Dendritic cell treated with granulocyte-macrophage colony-stimulating factor and Interleukin-4, amounts not matched to agents 40 ng/mL and 50 ng/mL, for 4 days (primary cell): ENCODE measurements at regions of chr2 and their contacts with region 1.

Region 1: GRCh38 chr2:165953655-165954606 is at the start of gene TTC21B:
- H3K4me3 Mint-ChIP-seq: no peak within 1 kb of the TSS
- H3K27ac Mint-ChIP-seq: no peak within 1 kb of the TSS
- H3K4me1 Mint-ChIP-seq: peaks cover 10% of the 10 kb centered on the region
- H3K27me3 Mint-ChIP-seq: no peaks in the 10 kb centered on the region

Region 2: DNA sequence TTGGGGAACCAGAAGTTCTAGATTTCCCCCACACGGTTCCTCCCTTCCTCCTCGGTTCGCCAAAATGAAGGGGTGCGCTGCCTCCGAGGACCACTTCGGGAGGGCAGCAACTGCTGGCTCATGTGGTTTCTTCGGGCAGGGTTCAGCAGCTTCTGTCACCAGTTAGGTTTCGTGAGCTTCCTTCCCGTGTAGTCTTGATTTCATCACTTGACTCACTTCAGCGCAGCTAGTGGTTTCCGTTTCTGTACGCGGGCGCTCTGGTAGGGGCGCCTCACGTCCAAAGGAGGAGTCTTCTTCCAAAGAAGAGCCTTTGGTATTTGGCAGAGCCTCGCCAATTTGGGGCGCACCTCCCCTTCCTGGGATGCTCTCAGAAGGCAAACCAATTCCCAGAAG is 159.4 kb before region 1 on chr2:
- intact Hi-C with region 1: loop called (anchors 5 kb)
- H3K4me3 Mint-ChIP-seq: peak overlapping the region; percentile 84
- H3K27ac Mint-ChIP-seq: peak overlapping the region; percentile 76
- H3K4me1 Mint-ChIP-seq: peaks cover 17% of the 10 kb centered on the region
- H3K27me3 Mint-ChIP-seq: peaks cover 3% of the 10 kb centered on the region

Region 3: GRCh38 chr2:166013878-166014277 is 59.9 kb after region 1 on chr2:
- intact Hi-C with region 1: no loop called
- H3K4me3 Mint-ChIP-seq: no peak overlapping the region
- H3K27ac Mint-ChIP-seq: no peak overlapping the region
- H3K4me1 Mint-ChIP-seq: no peaks in the 10 kb centered on the region
- H3K27me3 Mint-ChIP-seq: no peaks in the 10 kb centered on the region

Region 4: DNA sequence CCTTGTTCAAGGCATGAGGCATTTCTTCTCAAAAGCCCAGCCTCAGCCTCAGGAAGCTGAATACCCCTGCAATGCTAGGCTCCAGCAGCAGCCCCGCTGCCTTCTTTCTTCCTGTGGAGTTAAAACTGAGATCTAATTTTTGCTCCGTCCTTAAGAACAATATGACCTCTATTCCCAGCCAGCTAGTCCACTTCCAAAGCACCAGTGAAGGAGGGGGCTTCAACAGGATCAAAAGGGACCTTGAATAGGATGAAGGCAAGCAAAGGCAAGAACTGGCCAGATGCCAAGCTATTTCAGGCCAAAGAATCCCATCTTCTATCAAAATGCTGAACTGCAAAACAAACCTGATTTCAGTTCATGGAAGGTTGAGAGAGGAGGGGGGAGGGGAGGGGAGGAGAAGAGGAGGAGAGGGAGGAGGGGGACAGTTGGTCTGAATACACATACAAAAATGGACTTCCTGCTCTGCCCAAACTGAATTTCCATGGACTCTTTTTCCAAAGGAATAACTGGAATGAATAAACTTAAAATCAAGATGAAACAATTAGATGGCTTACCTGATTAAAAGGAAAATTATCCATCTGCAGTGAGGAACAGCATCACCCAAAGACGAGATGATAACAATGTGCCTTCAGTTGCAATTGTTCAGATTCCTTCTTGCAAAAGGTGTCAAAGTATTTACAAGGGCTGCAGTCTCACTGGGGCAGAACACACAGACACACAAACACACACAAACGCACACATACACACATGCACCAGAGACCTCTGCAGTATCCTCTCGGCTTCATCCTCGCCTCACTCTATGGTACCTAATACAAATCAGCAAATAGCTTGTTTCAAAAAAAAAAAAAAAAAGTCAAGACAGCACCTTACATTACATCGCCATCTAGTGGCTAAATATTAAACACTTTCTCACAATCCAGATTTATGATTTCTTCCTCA is 173.6 kb after region 1 on chr2 and contains the start of gene SCN1A:
- intact Hi-C with region 1: loop called (anchors 1 kb)
- H3K4me3 Mint-ChIP-seq: no peak within 1 kb of the TSS
- H3K27ac Mint-ChIP-seq: no peak within 1 kb of the TSS
- H3K4me1 Mint-ChIP-seq: no peaks in the 10 kb centered on the region
- H3K27me3 Mint-ChIP-seq: peaks cover 4% of the 10 kb centered on the region

Region 5: GRCh38 chr2:166417669-166418068 is 463.7 kb after region 1 on chr2:
- intact Hi-C with region 1: loop called (anchors 10 kb)
- H3K4me3 Mint-ChIP-seq: no peak overlapping the region
- H3K27ac Mint-ChIP-seq: no peak overlapping the region
- H3K4me1 Mint-ChIP-seq: peaks cover 10% of the 10 kb centered on the region
- H3K27me3 Mint-ChIP-seq: no peaks in the 10 kb centered on the region